PC-3 (cell line): ENCODE measurements at regions of chr16 and their contacts with region 1.

Region 1: DNA sequence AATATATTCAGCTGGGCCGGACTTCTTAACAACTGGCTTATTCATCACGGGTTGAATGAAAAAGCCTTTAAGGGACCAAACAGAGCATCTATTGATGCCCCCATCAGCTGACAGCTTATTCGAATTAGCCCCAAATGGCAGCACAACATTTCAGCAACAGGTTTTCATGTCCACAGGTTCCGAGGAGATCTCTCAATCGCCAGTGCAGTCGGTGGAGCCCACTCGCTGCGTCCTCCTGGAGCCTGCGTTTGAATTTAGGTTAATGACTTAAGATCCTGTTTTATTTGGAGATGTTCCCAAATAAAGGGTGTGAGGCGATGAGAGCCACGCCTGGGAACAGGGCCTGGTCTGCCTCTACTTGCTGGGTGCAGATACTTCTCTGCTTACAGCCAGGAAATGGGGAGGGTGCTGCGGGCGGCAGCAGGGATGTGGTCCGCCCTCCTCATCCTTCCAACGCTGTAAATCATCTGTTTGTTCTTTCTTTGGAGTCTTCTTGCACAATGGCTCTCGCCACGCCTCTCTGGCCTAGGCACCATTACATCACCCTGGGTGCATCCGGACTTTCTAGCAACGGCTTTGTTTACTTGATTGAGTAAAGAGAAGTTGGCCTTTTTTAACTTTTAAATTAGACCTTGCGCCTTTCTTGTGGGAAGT is 22.6 kb downstream of the NDE1 start:
- DNase-seq: peak; percentile 92
- ATAC-seq: peak; percentile 98
- H3K4me3 ChIP-seq: peak overlapping the region; percentile 37; the same call in 1 of the 2 replicates
- H3K27ac ChIP-seq: peak overlapping the region; percentile 86
- H3K4me1 ChIP-seq: peaks cover 23% of the 10 kb centered on the region
- H3K27me3 ChIP-seq: no peaks in the 10 kb centered on the region
- CTCF ChIP-seq: no peak

Region 2: DNA sequence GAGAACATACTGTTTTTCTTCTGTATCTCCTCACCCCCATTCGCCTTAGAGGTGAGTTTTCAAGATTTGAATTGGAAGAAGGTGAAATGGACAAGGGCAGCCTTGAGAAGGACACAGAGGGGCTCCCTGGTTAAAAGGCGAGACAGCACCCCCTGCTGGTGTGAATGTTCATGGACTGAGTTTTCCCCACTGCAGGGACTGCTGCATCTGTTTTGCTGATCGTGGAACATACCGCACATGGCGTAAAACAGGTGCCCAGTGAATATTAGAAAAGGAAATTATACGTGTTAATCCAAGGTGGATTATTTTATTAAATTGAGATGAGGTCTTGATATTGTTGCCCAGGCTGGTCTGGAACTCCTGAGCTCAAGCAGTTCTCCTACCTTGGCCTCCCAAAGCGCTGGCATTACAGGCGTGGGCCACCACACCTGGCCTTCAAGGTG is 31.9 kb after region 1 on chr16:
- CTCF ChIA-PET with region 1: no interaction called
- POLR2A ChIA-PET with region 1: no interaction called
- intact Hi-C with region 1: loop called (anchors 2 kb)
- DNase-seq: peak; percentile 73
- ATAC-seq: peak; percentile 79
- H3K4me3 ChIP-seq: no peak overlapping the region
- H3K27ac ChIP-seq: no peak overlapping the region
- H3K4me1 ChIP-seq: no peaks in the 10 kb centered on the region
- H3K27me3 ChIP-seq: no peaks in the 10 kb centered on the region
- CTCF ChIP-seq: peak; percentile 79

Region 3: DNA sequence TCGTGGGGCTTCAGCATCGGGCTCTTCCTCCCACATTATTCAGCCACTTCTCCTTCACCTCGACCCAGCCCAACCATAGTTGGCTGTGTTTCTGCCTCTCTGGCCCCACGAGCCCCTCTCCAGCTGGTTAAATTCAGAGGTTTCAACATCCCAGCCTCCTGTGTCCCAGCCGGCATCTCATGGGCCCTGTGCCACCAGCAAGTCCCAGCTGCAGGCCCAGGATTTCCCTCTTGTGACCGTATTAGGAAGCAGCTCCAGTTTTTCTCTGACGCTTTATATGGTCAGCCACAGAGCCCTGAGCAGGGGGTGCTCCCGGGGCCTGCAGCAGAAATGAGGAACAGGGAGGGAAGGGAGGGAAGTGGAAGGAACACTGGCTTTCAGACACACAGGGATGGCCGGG is 156.8 kb after region 1 on chr16:
- CTCF ChIA-PET with region 1: no interaction called
- POLR2A ChIA-PET with region 1: no interaction called
- intact Hi-C with region 1: no loop called
- DNase-seq: no peak
- ATAC-seq: no peak
- H3K4me3 ChIP-seq: no peak overlapping the region
- H3K27ac ChIP-seq: no peak overlapping the region
- H3K4me1 ChIP-seq: no peaks in the 10 kb centered on the region
- H3K27me3 ChIP-seq: no peaks in the 10 kb centered on the region
- CTCF ChIP-seq: no peak

Region 4: DNA sequence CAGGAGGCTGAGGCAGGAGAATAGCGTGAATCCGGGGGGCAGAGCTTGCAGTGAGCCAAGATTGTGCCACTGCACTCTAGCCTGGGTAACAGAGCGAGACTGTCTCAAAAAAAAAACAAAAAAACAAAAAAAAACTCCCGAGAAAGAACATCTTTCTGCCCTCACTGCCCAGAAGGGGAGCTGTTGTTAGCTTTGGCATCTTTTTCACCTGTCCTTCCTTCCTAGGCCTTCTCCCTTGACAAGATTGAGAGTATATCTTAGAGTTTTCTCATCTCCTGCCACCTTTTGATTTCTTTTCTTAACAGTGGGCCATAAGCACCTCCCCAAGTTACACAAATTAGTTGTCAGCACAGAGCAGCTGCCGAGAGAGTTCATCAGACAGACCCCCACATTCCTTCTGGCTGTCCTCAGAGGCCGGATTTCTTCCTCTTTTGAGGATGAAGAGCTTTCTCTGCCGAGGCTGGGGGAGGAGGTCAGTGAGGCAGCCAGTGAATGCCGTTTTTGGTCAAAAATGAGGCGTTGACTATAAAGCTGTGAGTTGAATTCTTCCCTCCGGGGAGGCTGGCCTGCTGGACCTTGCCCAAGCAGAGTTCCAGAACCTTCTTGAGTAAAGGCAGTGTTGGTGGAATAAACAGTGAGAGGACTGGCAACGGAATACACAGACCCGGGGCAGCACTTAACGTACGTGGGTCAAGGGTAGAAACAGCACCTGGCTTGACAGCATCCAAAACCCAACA is 423.6 kb after region 1 on chr16:
- CTCF ChIA-PET with region 1: no interaction called
- POLR2A ChIA-PET with region 1: no interaction called
- intact Hi-C with region 1: no loop called
- DNase-seq: no peak
- ATAC-seq: no peak
- H3K4me3 ChIP-seq: no peak overlapping the region
- H3K27ac ChIP-seq: no peak overlapping the region
- H3K4me1 ChIP-seq: no peaks in the 10 kb centered on the region
- H3K27me3 ChIP-seq: no peaks in the 10 kb centered on the region
- CTCF ChIP-seq: no peak; the same call in 1 of the 2 replicates